OCI-LY7 (cell line): ENCODE measurements at regions of chr19 and their contacts with region 1.

Region 1: GRCh38 chr19:18985257-18985656 is 44.2 kb upstream of the HOMER3 start:
- DNase-seq: no peak
- H3K4me3 ChIP-seq: no peak overlapping the region
- H3K27ac ChIP-seq: no peak overlapping the region
- H3K4me1 ChIP-seq: no peaks in the 10 kb centered on the region
- CTCF ChIP-seq: no peak

Region 2: GRCh38 chr19:18831524-18832305 is 153.5 kb before region 1 on chr19 and contains the start of gene UPF1:
- CTCF ChIA-PET with region 1: no interaction called
- POLR2A ChIA-PET with region 1: no interaction called
- intact Hi-C with region 1: no loop called
- DNase-seq: peak; percentile 98
- H3K4me3 ChIP-seq: peak within 1 kb of the TSS; percentile 94
- H3K27ac ChIP-seq: peak within 1 kb of the TSS; percentile 72
- H3K4me1 ChIP-seq: peaks cover 26% of the 10 kb centered on the region
- CTCF ChIP-seq: no peak
- total RNA-seq, gene UPF1: 65.2 and 77.2 TPM in 2 replicates

Region 3: DNA sequence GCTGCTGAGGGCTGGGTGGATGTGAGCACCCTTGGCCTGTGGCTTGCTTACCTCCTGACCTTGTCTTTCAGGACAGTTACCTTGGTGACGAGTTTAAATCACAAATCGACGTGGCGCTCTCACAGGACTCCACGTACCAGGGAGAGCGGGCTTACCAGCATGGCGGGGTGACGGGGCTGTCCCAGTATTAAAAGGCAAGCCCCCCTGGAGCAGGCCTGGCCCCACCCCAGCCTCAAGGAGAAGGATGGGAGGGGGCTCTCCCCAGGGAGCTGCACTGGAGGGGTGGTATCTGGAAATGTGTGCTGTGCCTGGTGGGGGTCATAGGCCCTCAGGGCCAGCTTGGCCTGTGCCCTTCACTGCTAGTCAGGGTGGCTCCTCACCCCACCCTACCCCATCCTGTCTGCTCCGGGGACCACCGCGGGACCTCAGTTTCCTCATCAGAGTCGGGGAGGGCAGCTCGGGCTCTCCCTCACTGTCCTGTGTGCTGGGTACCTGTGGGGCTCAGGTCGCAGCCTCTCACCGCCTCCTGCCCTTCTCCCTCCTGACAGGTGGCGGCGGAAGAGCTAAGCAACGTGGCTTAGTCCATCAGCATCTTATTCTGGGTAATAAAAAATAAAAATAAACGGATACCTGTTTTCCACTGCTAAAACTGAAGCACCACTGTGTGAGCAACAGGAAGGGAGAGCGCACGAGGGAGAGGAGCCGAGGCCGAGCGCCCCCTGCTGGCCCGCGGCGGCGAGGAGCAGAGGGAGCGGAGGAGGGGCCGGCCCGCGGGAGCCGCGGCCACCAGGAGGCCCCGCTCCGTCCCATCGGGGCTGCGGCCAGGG is 119.1 kb before region 1 on chr19:
- CTCF ChIA-PET with region 1: no interaction called
- POLR2A ChIA-PET with region 1: no interaction called
- intact Hi-C with region 1: loop called (anchors 1 kb)
- DNase-seq: peak; percentile 70
- H3K4me3 ChIP-seq: no peak overlapping the region
- H3K27ac ChIP-seq: peak overlapping the region; percentile 45
- H3K4me1 ChIP-seq: peaks cover 13% of the 10 kb centered on the region
- CTCF ChIP-seq: peak; percentile 99

Region 4: DNA sequence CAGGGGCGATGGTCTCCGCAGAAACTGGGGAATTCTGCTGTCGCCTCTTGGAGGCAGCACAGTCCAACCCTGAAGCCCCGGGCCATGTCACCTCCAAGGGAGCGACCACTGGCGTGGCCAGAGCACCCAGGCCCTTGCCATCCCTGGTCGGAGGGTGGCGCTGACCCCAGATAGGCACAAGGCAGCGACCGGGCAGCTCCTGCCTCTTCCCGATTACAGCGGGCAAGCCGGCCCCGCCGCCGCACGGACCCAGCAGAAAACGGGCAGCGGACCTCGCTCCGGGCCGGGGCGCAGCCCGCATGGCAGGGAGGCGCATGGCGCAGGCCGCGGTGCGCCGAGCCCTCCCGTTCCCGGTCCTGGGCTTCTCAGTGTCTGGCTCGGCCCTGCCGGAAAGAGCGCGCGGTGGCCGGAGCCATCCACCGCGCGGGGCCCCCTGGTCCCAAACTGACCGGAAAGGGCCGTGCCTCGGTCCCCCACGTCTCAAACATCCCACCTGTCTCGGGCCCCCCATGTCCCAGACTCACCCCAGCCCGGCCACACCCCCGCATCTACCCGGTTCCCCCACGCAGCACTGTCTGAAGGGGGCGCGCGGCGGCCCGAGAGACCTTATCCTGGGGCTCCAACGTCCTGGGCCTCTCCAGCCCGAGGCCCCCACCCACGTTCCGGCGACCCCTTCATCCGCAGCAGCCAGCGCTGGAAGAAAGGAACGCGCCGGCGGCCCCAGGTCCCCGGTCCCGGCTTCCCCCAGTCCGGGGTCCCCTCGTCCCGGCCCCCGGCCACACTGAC is 90.0 kb before region 1 on chr19:
- CTCF ChIA-PET with region 1: interaction called, 9 read pairs
- POLR2A ChIA-PET with region 1: no interaction called
- intact Hi-C with region 1: loop called (anchors 2 kb)
- DNase-seq: peak; percentile 34
- H3K4me3 ChIP-seq: no peak overlapping the region
- H3K27ac ChIP-seq: no peak overlapping the region
- H3K4me1 ChIP-seq: no peaks in the 10 kb centered on the region
- CTCF ChIP-seq: peak; percentile 39

Region 5: GRCh38 chr19:18919086-18919899 is 66.0 kb before region 1 on chr19 and contains the starts of genes COPE and DDX49:
- CTCF ChIA-PET with region 1: no interaction called
- POLR2A ChIA-PET with region 1: interaction called, 8 read pairs
- intact Hi-C with region 1: loop called (anchors 1 kb)
- DNase-seq: peak; percentile 100
- H3K4me3 ChIP-seq: peak within 1 kb of the TSS; percentile 96
- H3K27ac ChIP-seq: peak within 1 kb of the TSS; percentile 63
- H3K4me1 ChIP-seq: peaks cover 14% of the 10 kb centered on the region
- CTCF ChIP-seq: no peak
- total RNA-seq, gene COPE: 225 and 255 TPM in 2 replicates
- total RNA-seq, gene DDX49: 69.3 and 82.4 TPM in 2 replicates

Region 6: DNA sequence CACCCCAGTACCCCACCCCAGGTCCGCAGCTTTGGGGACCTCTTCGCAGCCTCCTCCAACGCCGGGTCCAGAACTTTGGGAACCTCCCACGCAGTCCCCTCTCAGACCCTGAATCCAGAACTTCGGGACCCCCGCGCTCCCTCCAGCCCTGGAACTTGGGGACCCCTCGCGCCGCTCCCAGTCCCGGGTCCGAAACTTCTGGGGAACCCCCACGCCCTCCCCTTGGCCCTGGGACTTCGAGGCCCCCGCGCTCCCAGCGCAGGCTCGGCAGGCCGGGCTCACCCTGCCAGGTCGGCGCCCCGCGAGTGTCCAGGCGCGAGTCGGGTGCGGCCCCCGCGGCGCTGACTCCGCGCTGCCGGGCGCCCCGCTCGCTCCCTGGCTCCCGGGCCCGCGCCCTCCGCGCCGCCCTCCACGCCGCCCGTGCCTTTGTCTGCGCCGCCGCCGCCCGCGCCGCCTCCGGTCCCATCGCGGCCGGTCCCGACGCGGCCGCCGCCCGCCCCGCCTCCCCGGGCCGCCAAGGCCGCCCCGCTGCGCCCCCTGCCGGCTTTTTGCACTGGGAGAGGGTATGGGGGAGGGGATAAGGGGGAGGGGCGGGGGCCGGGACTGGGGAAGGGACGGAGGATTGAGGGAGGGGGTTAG is 44.4 kb before region 1 on chr19 and contains the start of gene HOMER3:
- CTCF ChIA-PET with region 1: no interaction called
- POLR2A ChIA-PET with region 1: interaction called, 3 read pairs
- intact Hi-C with region 1: loop called (anchors 5 kb)
- DNase-seq: peak; percentile 80
- H3K4me3 ChIP-seq: peak within 1 kb of the TSS; percentile 78
- H3K27ac ChIP-seq: no peak within 1 kb of the TSS
- H3K4me1 ChIP-seq: peaks cover 51% of the 10 kb centered on the region
- CTCF ChIP-seq: no peak
- total RNA-seq, gene HOMER3: 8.6 and 16.1 TPM in 2 replicates